CD4-positive, alpha-beta T cell (primary cell): ENCODE measurements at regions of chr3 and their contacts with region 1.

Region 1: DNA sequence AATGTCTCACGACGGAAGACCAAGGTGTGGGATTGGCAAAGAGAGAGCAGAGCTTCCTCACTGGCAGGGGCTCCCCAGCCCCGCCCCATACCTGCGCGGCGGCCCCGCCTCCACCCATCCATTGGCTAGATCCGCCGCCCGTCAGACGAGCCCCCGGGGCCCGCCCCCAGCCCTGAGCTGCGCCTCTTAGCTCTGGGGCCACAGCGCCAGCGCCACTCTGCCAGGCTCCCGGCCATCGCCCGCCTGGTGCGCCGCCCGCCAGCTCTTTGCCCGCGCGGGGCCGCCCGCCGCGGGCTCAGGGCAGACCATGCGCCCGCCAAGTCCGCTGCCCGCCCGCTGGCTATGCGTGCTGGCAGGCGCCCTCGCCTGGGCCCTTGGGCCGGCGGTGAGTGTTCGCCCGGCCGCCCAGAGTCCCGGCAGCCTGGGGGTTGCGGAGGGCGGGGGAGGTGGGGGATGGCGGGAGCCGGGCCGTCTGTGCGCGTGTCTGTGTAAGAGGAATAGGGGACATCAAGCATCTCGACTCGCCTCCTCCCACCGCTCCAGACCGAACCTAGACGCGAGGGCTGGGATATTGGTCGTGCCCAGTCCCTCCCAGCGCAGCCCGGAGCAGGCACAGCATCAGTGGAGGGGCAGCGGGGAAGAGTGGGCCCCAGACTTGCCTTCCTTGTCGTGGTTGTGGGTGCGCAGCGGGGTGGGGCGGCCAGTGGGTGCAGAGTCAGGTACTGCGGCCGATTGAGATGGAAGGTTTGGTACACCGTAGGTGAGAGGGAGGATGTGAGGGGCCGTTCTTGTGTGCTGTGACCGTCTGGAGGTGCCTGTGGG is at the start of gene VIPR1:
- DNase-seq: peak in 13 of 14 experiments; percentile 90 to 98 (median 95)
- ATAC-seq: peak; percentile 96
- H3K4me3 ChIP-seq: peak within 1 kb of the TSS; percentile 76
- H3K4me3 Mint-ChIP-seq: peak within 1 kb of the TSS; percentile 91
- H3K27ac ChIP-seq: peak within 1 kb of the TSS; percentile 29 to 59
- H3K27ac Mint-ChIP-seq: peak within 1 kb of the TSS; percentile 87
- H3K4me1 ChIP-seq: peaks cover 54% of the 10 kb centered on the region
- H3K4me1 Mint-ChIP-seq: peaks cover 56% of the 10 kb centered on the region
- H3K27me3 ChIP-seq: peaks cover 10 to 14% of the 10 kb centered on the region in 2 experiments
- H3K27me3 Mint-ChIP-seq: peaks cover 22% of the 10 kb centered on the region
- CTCF ChIP-seq: no peak
- total RNA-seq, gene VIPR1: 66.8 to 67.6 TPM

Region 2: DNA sequence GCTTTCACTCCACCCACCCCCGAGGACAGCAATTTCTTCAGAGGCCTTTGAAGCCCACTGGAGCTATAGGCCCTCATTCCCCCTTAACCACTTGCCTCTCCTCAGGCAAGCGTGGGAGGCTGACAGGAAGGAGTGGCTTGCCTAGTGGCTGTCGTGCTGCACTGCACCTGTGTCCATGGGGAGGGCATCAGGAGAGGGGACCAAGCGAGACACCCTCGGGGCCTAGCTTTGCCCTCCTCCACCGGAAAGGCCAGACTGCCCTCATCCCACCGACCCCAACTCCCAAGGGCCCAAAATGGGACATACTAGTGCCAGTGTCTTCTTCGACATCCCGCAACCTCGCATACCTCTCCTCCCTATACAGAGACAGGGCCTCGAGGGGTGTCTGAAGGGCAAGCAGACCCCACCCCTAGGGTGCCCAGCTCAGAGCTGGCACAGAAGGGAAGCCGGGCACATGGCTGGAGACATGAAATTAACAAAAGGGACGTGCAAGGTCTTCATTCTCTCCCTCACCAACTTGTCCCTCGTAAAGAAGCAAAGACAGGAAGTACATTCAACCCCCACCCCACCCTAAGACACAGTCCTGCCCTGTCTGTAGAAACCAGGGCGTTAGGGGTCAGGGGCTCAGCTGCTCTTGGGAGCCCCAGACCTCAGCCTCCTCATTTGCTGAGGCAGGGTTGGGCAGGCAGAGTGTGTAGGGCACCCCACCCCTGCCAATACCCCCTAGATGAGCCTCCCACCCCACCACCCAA is 24.2 kb after region 1 on chr3:
- CTCF ChIA-PET with region 1: interaction called, 13 read pairs
- POLR2A ChIA-PET with region 1: interaction called, 17 read pairs
- intact Hi-C with region 1: no loop called
- DNase-seq: peak; percentile 11 to 69 (median 44)
- ATAC-seq: peak; percentile 91
- H3K4me3 ChIP-seq: no peak overlapping the region
- H3K4me3 Mint-ChIP-seq: peak overlapping the region; percentile 82
- H3K27ac ChIP-seq: peak overlapping the region; percentile 55 to 73
- H3K27ac Mint-ChIP-seq: peak overlapping the region; percentile 88
- H3K4me1 ChIP-seq: peaks cover 80% of the 10 kb centered on the region
- H3K4me1 Mint-ChIP-seq: peaks cover 67% of the 10 kb centered on the region
- H3K27me3 ChIP-seq: no peaks in the 10 kb centered on the region
- H3K27me3 Mint-ChIP-seq: no peaks in the 10 kb centered on the region
- CTCF ChIP-seq: peak; percentile 43

Region 3: GRCh38 chr3:42539869-42540714 is 37.5 kb after region 1 on chr3:
- CTCF ChIA-PET with region 1: interaction called, 15 read pairs
- POLR2A ChIA-PET with region 1: interaction called, 30 read pairs
- intact Hi-C with region 1: loop called (anchors 1 kb)
- DNase-seq: peak; percentile 39 to 81 (median 57)
- ATAC-seq: peak; percentile 71
- H3K4me3 ChIP-seq: no peak overlapping the region
- H3K4me3 Mint-ChIP-seq: no peak overlapping the region
- H3K27ac ChIP-seq: no peak overlapping the region
- H3K27ac Mint-ChIP-seq: peak overlapping the region; percentile 78
- H3K4me1 ChIP-seq: peaks cover 32% of the 10 kb centered on the region
- H3K4me1 Mint-ChIP-seq: peaks cover 29% of the 10 kb centered on the region
- H3K27me3 ChIP-seq: no peaks in the 10 kb centered on the region
- H3K27me3 Mint-ChIP-seq: no peaks in the 10 kb centered on the region
- CTCF ChIP-seq: peak; percentile 92

Region 4: DNA sequence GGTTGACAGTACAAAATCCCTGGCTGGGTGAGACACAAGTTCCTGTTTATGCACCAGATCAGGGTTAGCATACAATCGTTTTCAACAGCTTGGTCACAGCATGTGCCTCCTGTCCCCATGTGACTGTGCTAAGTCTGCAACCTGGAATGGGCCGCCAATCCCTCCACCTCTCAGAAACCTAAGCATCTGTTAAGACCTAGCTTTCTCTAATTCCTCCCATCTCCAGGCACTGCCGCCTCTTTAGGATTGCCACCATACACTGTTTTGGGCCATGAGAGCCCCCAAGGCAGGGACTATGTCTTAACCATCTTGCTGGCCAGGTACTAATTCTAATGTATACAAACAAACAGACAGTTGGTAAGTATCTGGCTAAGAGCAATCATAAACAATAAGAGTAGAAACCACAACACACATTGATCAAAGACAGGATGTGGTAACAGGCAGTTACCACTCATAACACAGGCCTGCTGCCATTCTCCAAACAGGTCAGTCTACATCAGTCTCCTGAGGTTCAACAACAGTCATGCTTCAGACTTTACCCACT is 53.5 kb after region 1 on chr3:
- CTCF ChIA-PET with region 1: no interaction called
- POLR2A ChIA-PET with region 1: interaction called, 13 read pairs
- intact Hi-C with region 1: loop called in 1 of 2 experiments (anchors 2 kb)
- DNase-seq: peak; percentile 31 to 87 (median 46)
- ATAC-seq: peak; percentile 86
- H3K4me3 ChIP-seq: no peak overlapping the region
- H3K4me3 Mint-ChIP-seq: peak overlapping the region; percentile 54
- H3K27ac ChIP-seq: peak overlapping the region; percentile 58 to 73
- H3K27ac Mint-ChIP-seq: peak overlapping the region; percentile 92
- H3K4me1 ChIP-seq: peaks cover 41% of the 10 kb centered on the region
- H3K4me1 Mint-ChIP-seq: peaks cover 47% of the 10 kb centered on the region
- H3K27me3 ChIP-seq: no peaks in the 10 kb centered on the region
- H3K27me3 Mint-ChIP-seq: no peaks in the 10 kb centered on the region
- CTCF ChIP-seq: no peak

Region 5: GRCh38 chr3:42590989-42591756 is 88.5 kb after region 1 on chr3:
- CTCF ChIA-PET with region 1: no interaction called
- POLR2A ChIA-PET with region 1: interaction called, 13 read pairs
- intact Hi-C with region 1: no loop called
- DNase-seq: peak in 1 of 14 experiments; percentile 11
- ATAC-seq: peak; percentile 30
- H3K4me3 ChIP-seq: peak overlapping the region; percentile 80
- H3K4me3 Mint-ChIP-seq: peak overlapping the region; percentile 99
- H3K27ac ChIP-seq: peak overlapping the region; percentile 48 to 83
- H3K27ac Mint-ChIP-seq: peak overlapping the region; percentile 89
- H3K4me1 ChIP-seq: peaks cover 23% of the 10 kb centered on the region
- H3K4me1 Mint-ChIP-seq: peaks cover 33% of the 10 kb centered on the region
- H3K27me3 ChIP-seq: no peaks in the 10 kb centered on the region
- H3K27me3 Mint-ChIP-seq: no peaks in the 10 kb centered on the region
- CTCF ChIP-seq: no peak

Region 6: GRCh38 chr3:42749753-42750231 is 247.2 kb after region 1 on chr3:
- CTCF ChIA-PET with region 1: no interaction called
- POLR2A ChIA-PET with region 1: interaction called, 5 read pairs
- intact Hi-C with region 1: loop called in 1 of 2 experiments (anchors 5 kb)
- DNase-seq: peak in 4 of 14 experiments; percentile 10 to 41 (median 30)
- ATAC-seq: no peak
- H3K4me3 ChIP-seq: no peak overlapping the region
- H3K4me3 Mint-ChIP-seq: no peak overlapping the region
- H3K27ac ChIP-seq: no peak overlapping the region
- H3K27ac Mint-ChIP-seq: no peak overlapping the region
- H3K4me1 ChIP-seq: peaks cover 49% of the 10 kb centered on the region
- H3K4me1 Mint-ChIP-seq: peaks cover 44% of the 10 kb centered on the region
- H3K27me3 ChIP-seq: no peaks in the 10 kb centered on the region
- H3K27me3 Mint-ChIP-seq: no peaks in the 10 kb centered on the region
- CTCF ChIP-seq: peak; percentile 21

Region 7: DNA sequence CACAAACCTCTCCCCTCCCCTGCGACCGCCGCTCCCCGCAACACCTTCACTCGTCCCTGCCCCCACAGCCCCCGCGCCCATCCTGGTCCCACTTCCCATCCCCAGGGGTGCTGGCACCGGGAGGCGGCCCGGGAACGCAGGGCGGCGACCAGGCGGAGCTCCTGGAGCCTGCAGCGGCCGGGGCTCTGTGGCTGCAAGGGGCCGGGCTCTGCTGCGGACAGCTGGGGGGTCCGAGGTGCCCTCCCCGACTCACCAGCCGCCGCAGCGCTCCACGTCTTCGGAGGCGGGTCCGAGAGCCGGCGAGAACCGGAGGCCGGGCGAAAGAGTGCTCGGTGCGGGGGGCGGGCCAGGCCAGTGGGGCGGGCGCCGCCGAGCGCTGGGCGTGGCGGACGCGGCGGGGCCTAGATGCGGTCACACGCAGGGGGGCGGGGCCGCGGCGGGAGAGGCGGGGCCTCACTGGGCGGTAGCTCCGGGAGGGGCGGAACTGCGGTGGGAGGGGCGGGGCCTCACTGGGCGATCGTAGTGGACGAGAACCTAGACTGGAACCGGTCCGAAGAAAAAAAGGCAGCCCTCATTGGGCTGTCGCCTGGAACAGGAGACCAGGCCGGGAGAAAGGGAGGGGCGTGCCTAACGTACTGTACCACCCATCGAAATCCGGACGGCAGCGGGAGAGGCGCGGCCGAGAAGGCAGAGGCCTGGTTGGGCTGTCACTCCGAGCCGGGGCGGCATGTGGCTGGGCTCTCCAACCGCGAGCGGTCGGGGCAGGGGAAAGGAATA is 1119.2 kb after region 1 on chr3 and contains the start of gene ANO10:
- CTCF ChIA-PET with region 1: no interaction called
- POLR2A ChIA-PET with region 1: no interaction called
- intact Hi-C with region 1: loop called in 1 of 2 experiments (anchors 10 kb)
- DNase-seq: peak; percentile 87 to 98 (median 93)
- ATAC-seq: peak; percentile 92
- H3K4me3 ChIP-seq: peak within 1 kb of the TSS; percentile 68
- H3K4me3 Mint-ChIP-seq: peak within 1 kb of the TSS; percentile 90
- H3K27ac ChIP-seq: peak within 1 kb of the TSS in 1 of 2 donors; percentile 23
- H3K27ac Mint-ChIP-seq: peak within 1 kb of the TSS; percentile 82
- H3K4me1 ChIP-seq: peaks cover 16% of the 10 kb centered on the region
- H3K4me1 Mint-ChIP-seq: peaks cover 21% of the 10 kb centered on the region
- H3K27me3 ChIP-seq: no peaks in the 10 kb centered on the region
- H3K27me3 Mint-ChIP-seq: no peaks in the 10 kb centered on the region
- CTCF ChIP-seq: no peak
- total RNA-seq, gene ANO10: 6.9 to 8.0 TPM